AG04449 (cell line): ENCODE measurements at regions of chr1 and their contacts with region 1.

Region 1: DNA sequence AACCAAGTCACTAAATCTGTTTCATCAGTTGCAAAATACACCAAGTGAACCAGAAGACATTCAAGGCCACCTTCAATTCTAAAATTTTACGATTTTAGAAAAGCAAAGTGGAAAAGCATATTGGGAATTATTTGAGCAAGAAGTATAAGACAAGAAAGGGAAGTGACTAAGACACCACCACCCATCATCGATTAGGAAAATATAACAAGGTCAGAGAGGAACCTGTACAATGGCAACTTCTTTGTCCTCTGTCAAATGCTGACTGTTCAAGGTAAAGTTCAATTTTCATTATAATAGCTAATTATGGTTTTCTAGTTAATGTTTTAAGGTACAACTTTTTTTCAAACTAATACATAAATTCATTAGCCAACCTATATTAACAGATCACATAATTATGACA is 10.8 kb downstream of the FRRS1 start:
- DNase-seq: no peak
- H3K4me3 ChIP-seq: no peak overlapping the region
- CTCF ChIP-seq: no peak

Region 2: GRCh38 chr1:99374109-99374508 is 381.6 kb before region 1 on chr1:
- CTCF ChIA-PET with region 1: no interaction called
- POLR2A ChIA-PET with region 1: no interaction called
- DNase-seq: no peak
- H3K4me3 ChIP-seq: no peak overlapping the region
- CTCF ChIP-seq: no peak

Region 3: GRCh38 chr1:99737016-99737415 is 18.6 kb before region 1 on chr1:
- CTCF ChIA-PET with region 1: interaction called, 10 read pairs
- POLR2A ChIA-PET with region 1: no interaction called
- DNase-seq: peak; percentile 26
- H3K4me3 ChIP-seq: no peak overlapping the region
- CTCF ChIP-seq: peak; percentile 43